AG04449 (cell line): ENCODE measurements at regions of chr5 and their contacts with region 1.

Region 1: DNA sequence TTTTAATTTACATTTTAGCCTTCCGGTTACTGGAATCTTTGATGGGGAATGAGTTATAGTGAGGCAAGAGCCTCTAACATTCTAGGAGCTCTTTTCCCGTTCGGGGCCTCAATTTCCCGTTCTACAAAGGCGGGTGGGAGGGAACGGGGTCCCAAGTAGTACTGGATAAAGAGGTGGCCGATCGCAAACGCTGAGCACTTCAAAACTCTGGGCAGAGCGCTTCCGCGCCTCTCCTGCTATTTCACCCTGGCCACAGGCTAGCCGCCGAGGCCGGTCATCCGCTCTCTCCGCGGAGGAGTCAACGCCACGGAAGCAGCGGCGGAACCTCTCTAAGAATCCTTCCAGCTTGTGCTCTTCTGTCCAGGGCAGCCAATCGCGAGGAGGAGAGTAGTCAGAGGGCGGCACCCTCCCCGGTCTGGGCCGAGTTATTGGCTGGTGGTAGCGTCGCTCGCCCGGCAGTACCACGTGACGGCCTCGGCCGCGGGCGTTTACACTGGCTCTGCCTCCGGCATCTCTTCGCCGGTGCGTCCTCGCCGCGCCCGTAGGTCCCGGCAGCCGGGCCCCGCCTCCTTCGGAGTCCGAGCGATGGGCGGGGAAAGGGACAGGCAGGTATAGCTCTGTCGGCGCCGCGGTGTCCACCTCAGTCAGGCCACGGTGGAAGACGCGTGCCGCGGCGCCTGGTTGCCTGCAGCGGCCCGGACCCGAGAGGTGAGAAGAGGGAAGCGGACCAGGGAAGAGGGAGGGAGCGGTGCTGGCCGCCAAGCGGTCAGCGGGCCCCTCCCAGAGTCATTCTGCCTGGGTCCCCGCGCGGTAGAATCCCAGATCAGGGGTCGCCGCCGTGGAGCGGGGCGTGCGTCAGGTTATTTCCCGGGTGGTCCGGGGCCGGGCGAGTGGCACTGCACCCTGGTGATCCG is at the start of gene SLC26A2:
- DNase-seq: peak; percentile 87
- H3K4me3 ChIP-seq: peak within 1 kb of the TSS; percentile 78
- CTCF ChIP-seq: no peak

Region 2: GRCh38 chr5:149847611-149848010 is 112.9 kb before region 1 on chr5:
- CTCF ChIA-PET with region 1: interaction called, 59 read pairs
- POLR2A ChIA-PET with region 1: interaction called, 5 read pairs
- DNase-seq: no peak
- H3K4me3 ChIP-seq: no peak overlapping the region
- CTCF ChIP-seq: no peak

Region 3: GRCh38 chr5:149852641-149853330 is 107.7 kb before region 1 on chr5:
- CTCF ChIA-PET with region 1: interaction called, 59 read pairs
- POLR2A ChIA-PET with region 1: interaction called, 5 read pairs
- DNase-seq: peak; percentile 29
- H3K4me3 ChIP-seq: no peak overlapping the region
- CTCF ChIP-seq: peak; percentile 86

Region 4: DNA sequence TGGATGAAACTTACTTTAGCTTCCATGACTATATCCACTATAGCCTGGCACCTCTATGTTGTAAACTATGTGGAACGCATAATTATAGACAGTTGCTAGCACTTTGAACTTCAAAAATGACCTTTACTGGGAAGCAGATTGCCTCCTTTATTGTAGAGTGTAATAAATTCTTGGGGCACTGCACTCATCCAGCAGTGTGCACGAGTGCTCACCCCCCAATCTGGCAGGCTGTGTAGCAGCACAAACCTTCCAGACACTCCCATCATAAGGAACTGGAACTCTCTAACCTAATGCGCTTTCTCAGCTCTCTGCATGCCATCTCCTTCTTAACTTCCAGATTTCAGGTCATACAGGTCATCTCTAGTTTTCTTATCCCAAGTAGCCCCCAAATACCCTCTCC is 14.4 kb before region 1 on chr5:
- CTCF ChIA-PET with region 1: interaction called, 16 read pairs
- POLR2A ChIA-PET with region 1: no interaction called
- DNase-seq: no peak
- H3K4me3 ChIP-seq: no peak overlapping the region
- CTCF ChIP-seq: no peak

Region 5: DNA sequence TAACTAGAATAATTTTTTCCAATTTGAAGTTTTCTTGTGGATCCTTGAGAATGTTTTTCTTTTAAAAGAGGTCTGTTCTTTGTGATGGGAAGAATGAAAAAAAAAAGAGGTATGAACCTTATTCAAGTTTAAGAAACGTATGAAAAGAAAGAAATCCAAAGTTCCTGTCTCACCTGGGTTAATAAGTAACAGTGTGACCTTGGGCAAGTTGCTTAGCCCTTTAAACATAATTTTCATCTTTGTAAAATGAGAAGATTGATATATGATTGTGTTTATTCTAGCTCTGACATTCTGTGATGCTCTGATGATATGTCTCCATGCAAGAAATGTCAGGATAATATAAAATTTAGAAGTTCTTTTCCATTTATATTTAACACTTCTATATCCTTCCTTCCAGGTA is 19.4 kb after region 1 on chr5:
- CTCF ChIA-PET with region 1: interaction called, 18 read pairs
- POLR2A ChIA-PET with region 1: interaction called, 3 read pairs
- DNase-seq: no peak
- H3K4me3 ChIP-seq: no peak overlapping the region
- CTCF ChIP-seq: no peak

Region 6: GRCh38 chr5:150189728-150190502 is 229.4 kb after region 1 on chr5 and contains the start of gene SLC6A7:
- CTCF ChIA-PET with region 1: no interaction called
- POLR2A ChIA-PET with region 1: no interaction called
- DNase-seq: no peak
- H3K4me3 ChIP-seq: no peak within 1 kb of the TSS
- CTCF ChIP-seq: no peak